ENCODE measurements at regions of chr12 and their contacts with region 1.

Region 1: DNA sequence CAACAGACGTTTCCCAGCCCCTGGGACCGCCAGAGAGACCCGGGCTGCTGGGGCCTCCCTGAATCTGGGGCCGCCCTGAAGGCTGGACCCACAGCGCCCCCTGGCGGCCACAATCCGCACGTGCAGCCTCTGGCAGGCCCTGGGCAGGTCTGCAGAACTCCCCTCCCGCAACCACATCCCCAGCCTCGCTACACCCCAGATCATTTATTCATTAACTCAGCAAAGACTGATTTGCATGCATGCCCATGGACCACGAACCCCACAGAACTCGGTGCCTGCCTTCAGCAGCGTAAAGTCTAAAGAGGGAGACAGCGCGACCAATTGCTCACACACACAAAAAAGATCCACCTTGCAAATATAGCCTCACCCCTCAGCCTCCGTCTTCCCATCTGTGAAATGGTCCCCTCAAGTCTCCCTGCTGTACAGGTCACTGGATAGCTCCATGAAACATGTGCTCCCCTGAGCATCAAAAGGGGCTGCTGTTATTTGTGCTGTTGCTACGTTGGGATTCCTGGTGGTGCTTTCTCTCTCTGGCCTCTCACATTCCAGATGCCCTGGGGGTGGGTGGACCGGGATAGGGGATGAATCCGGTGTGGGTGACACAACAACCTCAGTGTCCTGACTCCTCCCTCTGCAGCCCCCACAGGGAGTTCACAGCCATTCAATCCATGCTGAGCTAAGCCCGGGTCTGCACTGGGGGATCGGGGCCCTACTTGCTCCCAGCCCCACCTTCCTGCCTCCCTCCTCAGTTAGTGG is 96.4 kb downstream of the SCARB1 start:
- DNase-seq: peak; percentile 73 to 90 (median 81)
- ATAC-seq: peak; percentile 71 to 82 (median 76)
- H3K4me3 ChIP-seq: no peak overlapping the region
- H3K27ac ChIP-seq: peak overlapping the region in 8 of 12 donors; percentile 60 to 86 (median 74)
- H3K4me1 ChIP-seq: peaks cover 0 to 59% (median 30%) of the 10 kb centered on the region in 12 donors
- H3K27me3 ChIP-seq: no peaks in the 10 kb centered on the region
- CTCF ChIP-seq: peak; percentile 98 to 100 (median 100)
- POLR2A ChIP-seq: no peak

Region 2: DNA sequence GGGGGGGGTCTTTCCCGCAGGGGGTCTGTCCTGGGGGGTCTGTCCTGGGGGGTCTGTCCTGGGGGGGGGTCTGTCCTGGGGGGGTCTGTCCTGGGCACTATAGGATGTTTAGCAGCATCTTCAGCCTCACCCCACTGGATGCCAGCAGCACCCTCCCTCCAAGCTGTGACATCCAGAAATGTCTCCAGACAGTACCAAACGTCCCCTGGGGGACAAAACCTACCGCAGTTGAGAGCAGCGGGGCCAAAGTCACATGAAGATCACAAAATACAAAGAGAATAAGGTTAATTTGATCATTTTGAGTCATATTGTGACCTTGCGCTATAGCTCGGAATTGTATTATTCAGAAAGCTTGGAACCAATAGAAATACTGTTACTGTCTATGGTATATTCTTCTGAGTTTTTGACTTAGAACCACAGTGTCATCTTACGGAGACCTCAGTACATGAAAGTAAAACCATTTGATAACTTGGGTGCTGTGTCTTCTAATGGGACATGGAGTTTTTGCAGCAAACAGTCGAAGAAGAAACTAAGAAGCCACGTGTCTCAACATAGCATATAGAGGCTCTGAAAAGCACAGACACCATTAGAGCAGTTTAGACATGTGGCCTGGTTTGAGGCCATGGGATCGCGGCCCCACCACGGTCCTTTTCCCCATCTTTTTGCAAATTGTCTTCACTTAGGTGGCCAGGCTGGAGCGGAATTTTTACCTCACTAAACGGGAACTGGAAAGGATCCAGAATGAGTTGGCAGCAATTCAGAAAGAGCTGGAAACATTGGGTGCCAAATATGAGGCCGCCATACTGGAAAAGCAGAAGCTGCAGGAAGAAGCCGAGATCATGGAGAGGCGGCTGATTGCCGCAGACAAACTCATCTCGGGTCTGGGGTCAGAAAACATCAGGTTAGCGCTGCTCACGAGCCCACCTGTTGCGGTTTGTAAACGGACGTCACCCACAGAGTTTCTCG is 854.5 kb before region 1 on chr12:
- intact Hi-C with region 1: loop called in 2 of 10 experiments (anchors 10 kb)
- DNase-seq: no peak
- ATAC-seq: no peak
- H3K4me3 ChIP-seq: no peak overlapping the region
- H3K27ac ChIP-seq: no peak overlapping the region
- H3K4me1 ChIP-seq: peaks cover 0 to 4% (median 0%) of the 10 kb centered on the region in 12 donors
- H3K27me3 ChIP-seq: peaks cover 0 to 7% (median 0%) of the 10 kb centered on the region in 9 donors
- CTCF ChIP-seq: no peak
- POLR2A ChIP-seq: no peak

Region 3: DNA sequence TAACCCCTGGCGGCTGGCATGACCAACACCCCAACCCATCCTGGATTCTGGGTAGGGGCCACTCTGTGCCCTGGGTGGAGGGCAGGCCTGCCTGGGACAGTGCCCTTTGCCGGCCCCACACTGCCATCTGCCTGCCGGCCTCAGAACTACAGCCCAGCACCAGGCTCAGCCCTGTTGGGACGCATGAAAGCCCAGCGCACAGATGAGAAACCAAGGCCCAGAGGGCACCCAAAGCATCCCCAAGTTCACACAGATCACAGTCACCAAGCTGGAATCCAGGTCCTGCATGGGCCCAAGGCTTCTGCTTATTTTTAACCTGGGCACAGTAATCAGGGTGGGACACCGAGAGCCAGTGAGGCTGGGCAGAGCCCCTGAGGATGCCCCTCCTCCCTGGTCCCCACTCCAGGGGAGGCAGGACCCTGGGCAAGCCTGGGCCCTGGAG is 446.2 kb before region 1 on chr12:
- intact Hi-C with region 1: loop called in 6 of 10 experiments (anchors 2 to 10 kb)
- DNase-seq: peak; percentile 58 to 84 (median 65)
- ATAC-seq: peak; percentile 68 to 78 (median 74)
- H3K4me3 ChIP-seq: no peak overlapping the region
- H3K27ac ChIP-seq: no peak overlapping the region
- H3K4me1 ChIP-seq: peaks cover 0 to 6% (median 0%) of the 10 kb centered on the region in 12 donors
- H3K27me3 ChIP-seq: no peaks in the 10 kb centered on the region
- CTCF ChIP-seq: peak; percentile 83 to 97 (median 94)
- POLR2A ChIP-seq: no peak

Region 4: DNA sequence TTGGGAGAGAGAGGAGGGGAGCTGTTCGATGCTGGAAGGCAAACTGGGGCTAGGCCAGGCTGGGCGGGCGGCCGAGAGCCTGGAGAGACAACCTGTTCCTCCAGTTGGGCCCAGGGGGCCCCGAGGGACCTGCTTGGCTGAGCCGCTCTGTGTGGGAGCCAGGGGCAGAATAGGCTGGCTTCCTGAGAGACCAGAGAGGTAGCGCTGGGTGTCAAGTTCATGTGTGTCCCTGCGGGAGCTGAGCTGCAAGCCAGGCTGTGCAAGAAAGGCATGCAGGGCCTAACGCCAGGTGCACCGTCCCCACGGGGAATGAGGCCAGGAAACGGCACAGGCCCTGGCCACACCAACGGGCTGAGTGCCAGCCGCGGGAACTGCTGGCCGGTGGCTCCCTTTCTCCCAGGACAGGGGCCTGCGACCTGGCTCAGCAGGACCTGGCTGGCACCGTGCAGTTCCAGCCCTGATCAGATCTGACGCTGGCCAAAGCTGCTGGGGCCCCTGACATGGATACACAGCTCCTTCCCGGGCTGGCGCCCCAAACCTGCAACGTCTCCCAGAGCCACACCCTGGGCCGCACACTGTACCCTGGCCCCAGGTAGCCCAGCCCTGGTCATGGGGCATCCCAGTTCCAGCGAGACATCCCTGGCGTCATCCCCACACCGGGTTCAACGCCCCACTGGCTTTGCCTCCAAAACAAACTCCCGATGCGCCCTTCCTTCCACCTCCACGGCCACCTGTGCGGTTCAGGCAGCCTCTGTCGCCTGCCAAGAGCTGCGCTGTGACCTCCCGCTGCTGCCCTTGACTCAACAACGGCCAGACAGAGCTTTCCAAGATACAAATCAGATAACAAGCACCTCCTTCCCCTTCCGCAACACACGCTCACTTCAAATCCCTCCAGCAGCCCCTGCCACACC is 407.3 kb before region 1 on chr12:
- intact Hi-C with region 1: loop called in 2 of 10 experiments (anchors 10 kb)
- DNase-seq: peak; percentile 85 to 95 (median 92)
- ATAC-seq: peak; percentile 83 to 92 (median 90)
- H3K4me3 ChIP-seq: no peak overlapping the region
- H3K27ac ChIP-seq: peak overlapping the region in 11 of 12 donors; percentile 44 to 87 (median 64)
- H3K4me1 ChIP-seq: peaks cover 15 to 68% (median 45%) of the 10 kb centered on the region in 12 donors
- H3K27me3 ChIP-seq: no peaks in the 10 kb centered on the region
- CTCF ChIP-seq: no peak
- POLR2A ChIP-seq: no peak

Region 5: DNA sequence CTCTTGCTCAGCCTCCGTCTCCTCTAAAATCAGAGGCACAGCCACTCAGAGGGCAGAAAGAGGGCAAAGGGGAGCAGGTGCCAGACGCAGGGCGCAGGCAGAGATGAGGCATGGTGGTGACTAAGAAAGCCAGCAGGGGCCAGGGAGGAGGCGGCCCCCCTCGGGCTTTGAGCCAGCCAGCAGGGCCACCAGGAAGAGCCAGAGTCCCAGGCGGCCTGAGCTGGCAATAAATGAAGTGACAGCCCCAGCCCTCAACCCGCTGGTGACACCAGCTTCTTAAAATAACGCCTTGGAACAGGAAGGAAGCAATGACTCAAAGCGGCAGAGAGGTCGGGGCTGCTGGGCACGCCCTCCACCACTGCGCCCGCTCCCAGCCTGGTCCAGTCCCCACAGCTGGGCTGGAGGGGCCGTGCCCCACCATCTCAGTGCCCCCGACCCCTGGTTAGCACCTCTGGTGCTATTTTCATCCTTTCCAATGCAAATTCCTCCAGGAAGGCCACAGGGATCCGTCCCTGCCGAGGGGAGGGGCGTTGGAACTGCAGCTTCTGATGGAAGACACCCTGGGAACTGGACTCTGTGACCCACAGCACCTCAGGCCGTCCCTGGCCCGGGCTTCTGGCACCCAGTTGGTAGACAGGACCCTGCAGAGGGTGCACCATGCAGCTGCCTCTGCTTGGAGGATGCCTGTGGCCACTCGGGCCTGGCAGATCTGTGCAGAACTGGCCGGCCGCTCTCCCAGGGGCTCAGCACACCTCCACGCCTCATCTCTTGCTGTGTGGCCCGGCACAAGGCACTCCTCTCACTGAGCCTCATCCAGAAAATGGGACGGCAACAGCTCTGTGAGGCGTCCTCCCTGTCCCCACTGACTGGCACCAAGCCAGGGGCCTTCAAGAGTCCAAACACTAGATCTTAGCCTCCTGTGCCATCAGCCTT is 313.6 kb before region 1 on chr12:
- intact Hi-C with region 1: loop called in 3 of 10 experiments (anchors 5 to 10 kb)
- DNase-seq: peak; percentile 90 to 96 (median 92)
- ATAC-seq: peak; percentile 82 to 90 (median 82)
- H3K4me3 ChIP-seq: peak overlapping the region in 8 of 12 donors; percentile 2 to 38 (median 19)
- H3K27ac ChIP-seq: peak overlapping the region; percentile 37 to 94 (median 90)
- H3K4me1 ChIP-seq: peaks cover 19 to 82% (median 66%) of the 10 kb centered on the region in 12 donors
- H3K27me3 ChIP-seq: no peaks in the 10 kb centered on the region
- CTCF ChIP-seq: peak in 4 of 12 donors; percentile 2 to 31 (median 23)
- POLR2A ChIP-seq: no peak

Region 6: GRCh38 chr12:124620751-124621660 is 146.2 kb before region 1 on chr12:
- intact Hi-C with region 1: loop called in 1 of 10 experiments (anchors 5 kb)
- DNase-seq: peak; percentile 49 to 85 (median 80)
- ATAC-seq: peak; percentile 52 to 79 (median 56)
- H3K4me3 ChIP-seq: no peak overlapping the region
- H3K27ac ChIP-seq: peak overlapping the region in 10 of 12 donors; percentile 6 to 65 (median 44)
- H3K4me1 ChIP-seq: peaks cover 3 to 41% (median 25%) of the 10 kb centered on the region in 12 donors
- H3K27me3 ChIP-seq: no peaks in the 10 kb centered on the region
- CTCF ChIP-seq: no peak
- POLR2A ChIP-seq: no peak

Region 7: DNA sequence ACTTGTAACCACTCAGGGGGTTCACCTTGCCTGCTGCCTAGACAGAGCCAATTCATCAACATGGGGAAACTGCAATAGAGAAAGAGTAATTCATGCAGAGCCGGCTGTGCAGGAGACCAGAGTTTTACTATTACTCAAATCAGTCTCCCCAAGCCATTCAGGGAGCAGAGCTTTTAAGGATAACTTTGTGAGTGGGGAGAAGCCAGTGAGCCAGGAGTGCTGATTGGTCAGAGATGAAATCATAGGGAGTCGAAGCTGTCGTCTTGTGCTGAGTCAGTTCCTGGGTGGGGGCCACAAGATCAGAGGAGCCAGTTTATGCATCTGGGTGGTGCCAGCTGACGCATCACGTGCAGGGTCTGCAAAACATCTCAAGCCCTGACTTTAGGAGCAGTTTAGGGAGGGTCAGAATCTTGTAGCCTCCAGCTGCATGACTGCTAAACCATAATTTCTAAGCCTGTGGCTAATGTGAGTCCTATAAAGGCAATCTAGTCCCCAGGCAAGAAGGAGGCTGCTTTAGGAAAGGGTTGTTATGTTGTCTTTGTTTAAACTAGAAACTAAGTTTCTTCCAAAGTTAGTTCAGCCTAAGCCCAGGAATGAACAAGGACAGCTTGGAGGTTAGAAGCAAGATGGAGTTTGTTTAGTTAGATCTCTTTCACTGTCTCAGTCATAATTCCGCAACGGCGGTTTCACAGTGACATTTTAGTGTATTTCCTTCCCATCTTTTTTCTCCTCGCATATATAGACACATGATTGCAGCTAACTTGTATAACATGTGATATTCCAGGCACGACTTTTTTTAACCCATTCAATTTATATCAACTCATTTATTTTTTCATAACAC is 130.9 kb before region 1 on chr12:
- intact Hi-C with region 1: no loop called
- DNase-seq: peak in 2 of 5 donors; percentile 58 to 74
- ATAC-seq: no peak
- H3K4me3 ChIP-seq: no peak overlapping the region
- H3K27ac ChIP-seq: peak overlapping the region in 2 of 12 donors; percentile 17 to 59
- H3K4me1 ChIP-seq: peaks cover 0 to 47% (median 2%) of the 10 kb centered on the region in 12 donors
- H3K27me3 ChIP-seq: no peaks in the 10 kb centered on the region
- CTCF ChIP-seq: no peak
- POLR2A ChIP-seq: no peak

Region 8: DNA sequence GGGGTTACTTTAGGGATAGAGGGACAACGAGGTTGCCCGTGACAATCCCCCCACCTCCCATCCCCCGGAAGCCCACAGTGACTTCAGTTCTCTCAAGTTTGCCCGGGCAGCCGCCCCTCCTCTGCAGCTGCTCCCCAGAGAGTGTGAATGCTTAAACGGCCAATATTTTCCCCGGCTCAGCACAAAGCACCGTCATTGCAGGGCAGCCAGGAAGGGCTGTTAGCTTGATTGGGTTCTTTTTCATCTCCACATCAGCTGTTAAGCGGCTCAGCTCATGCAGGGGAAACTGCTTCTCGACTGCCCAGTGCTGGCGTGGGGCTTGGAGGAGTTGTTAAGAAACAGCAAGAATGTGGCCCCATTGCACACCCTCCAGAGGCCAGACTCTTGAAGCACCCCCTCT is 79.3 kb before region 1 on chr12:
- intact Hi-C with region 1: loop called in 2 of 10 experiments (anchors 1 to 5 kb)
- DNase-seq: peak in 4 of 5 donors; percentile 56 to 76 (median 61)
- ATAC-seq: peak in 3 of 4 donors; percentile 11 to 56 (median 51)
- H3K4me3 ChIP-seq: no peak overlapping the region
- H3K27ac ChIP-seq: peak overlapping the region; percentile 2 to 84 (median 68)
- H3K4me1 ChIP-seq: peaks cover 10 to 63% (median 43%) of the 10 kb centered on the region in 12 donors
- H3K27me3 ChIP-seq: no peaks in the 10 kb centered on the region
- CTCF ChIP-seq: no peak
- POLR2A ChIP-seq: no peak

Region 9: DNA sequence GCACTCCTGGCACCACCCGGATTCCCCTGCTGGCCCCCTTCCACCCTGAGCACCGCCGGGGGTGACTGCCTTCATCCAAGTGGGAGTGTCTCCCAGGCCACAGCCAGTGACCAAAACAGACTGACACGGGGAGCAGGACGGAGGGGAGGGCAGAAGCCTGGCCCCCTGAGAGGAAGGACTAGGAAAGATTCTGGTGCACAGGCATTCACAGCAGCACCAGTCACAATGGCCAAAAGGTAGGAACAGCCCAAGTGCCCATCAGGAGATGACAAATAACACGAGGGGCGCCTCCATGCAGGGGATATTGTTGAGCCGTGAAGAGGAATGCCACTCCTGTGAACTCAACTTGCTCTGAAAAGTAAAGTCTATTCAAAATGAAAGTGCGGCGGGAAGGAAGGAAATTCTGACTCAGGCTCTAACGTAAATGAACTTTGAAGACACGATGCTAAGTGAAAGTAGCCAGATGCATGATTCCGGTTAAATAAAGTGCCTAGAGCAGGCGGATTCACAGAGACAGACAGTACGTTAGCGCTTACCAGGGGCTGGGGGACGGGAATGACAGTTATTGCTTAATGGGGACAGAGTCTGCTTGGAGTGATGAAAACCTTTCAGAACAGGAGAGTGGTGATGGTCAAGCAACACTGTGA is 53.7 kb before region 1 on chr12:
- intact Hi-C with region 1: no loop called
- DNase-seq: peak in 4 of 5 donors; percentile 45 to 53 (median 48)
- ATAC-seq: peak; percentile 57 to 80 (median 68)
- H3K4me3 ChIP-seq: peak overlapping the region in 10 of 12 donors; percentile 7 to 47 (median 31)
- H3K27ac ChIP-seq: peak overlapping the region; percentile 81 to 97 (median 88)
- H3K4me1 ChIP-seq: peaks cover 0 to 48% (median 8%) of the 10 kb centered on the region in 12 donors
- H3K27me3 ChIP-seq: no peaks in the 10 kb centered on the region
- CTCF ChIP-seq: no peak
- POLR2A ChIP-seq: no peak

Region 10: DNA sequence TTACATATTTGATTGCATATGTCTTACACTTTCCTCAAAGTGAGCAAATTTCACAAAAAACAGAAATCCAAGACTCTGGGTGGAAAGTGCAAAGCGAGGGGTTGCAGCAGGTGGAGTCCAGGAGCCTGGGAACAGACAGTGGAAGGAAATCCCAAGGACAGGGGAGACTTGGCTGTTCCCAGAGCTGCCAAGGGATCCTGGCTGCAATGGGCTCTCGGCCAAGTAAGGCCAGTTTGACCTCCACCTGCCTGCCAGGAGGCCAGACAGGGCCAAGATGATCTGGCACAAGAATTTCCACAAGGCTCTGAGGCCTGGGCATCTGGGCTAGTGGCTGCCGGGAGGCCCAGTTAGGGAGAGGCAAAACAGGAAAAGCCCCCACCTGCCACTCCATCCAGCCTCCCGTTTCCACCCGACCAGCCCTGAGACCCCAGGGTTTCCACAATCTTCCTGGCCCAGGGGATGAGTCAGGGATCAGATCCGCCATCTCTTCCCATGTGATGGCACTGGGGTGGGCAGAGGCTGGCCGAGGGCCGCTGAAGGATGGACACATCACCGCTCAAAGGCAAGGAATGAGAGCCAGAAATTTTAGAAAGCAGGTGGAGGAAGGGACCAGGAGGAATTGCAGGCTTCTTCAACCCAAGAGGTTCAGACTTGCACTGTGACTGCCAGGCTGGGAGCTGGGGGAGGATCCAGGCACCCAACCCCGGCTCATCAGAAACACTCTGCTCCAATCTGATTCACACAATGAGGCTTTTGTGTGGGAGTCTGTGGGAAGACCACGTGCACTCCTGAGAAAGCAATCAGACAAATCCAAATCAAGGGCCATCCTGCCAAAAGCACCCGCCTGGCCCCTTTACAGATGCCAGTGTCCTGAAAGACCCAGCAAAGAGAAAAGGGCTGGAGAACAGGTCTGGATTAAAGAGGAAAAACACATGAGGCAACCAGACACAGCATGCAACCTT is 80.2 kb after region 1 on chr12:
- intact Hi-C with region 1: no loop called
- DNase-seq: peak in 1 of 5 donors; percentile 71
- ATAC-seq: peak in 3 of 4 donors; percentile 28 to 56 (median 47)
- H3K4me3 ChIP-seq: no peak overlapping the region
- H3K27ac ChIP-seq: peak overlapping the region in 4 of 12 donors; percentile 7 to 64 (median 30)
- H3K4me1 ChIP-seq: peaks cover 0 to 46% (median 26%) of the 10 kb centered on the region in 12 donors
- H3K27me3 ChIP-seq: no peaks in the 10 kb centered on the region
- CTCF ChIP-seq: no peak
- POLR2A ChIP-seq: no peak

Region 11: GRCh38 chr12:124979568-124979967 is 212.3 kb after region 1 on chr12:
- intact Hi-C with region 1: no loop called
- DNase-seq: no peak
- ATAC-seq: no peak
- H3K4me3 ChIP-seq: no peak overlapping the region
- H3K27ac ChIP-seq: no peak overlapping the region
- H3K4me1 ChIP-seq: no peaks in the 10 kb centered on the region
- H3K27me3 ChIP-seq: no peaks in the 10 kb centered on the region
- CTCF ChIP-seq: no peak
- POLR2A ChIP-seq: no peak